ENCODE measurements at regions of chr12 and their contacts with region 1.

Region 1: GRCh38 chr12:11765817-11766794 is 116.6 kb downstream of the ETV6 start:
- DNase-seq: peak; percentile 88
- H3K4me3 Mint-ChIP-seq: peak overlapping the region; percentile 28
- H3K27ac Mint-ChIP-seq: peak overlapping the region; percentile 84
- H3K4me1 Mint-ChIP-seq: peaks cover 99% of the 10 kb centered on the region
- H3K27me3 Mint-ChIP-seq: no peaks in the 10 kb centered on the region

Region 2: DNA sequence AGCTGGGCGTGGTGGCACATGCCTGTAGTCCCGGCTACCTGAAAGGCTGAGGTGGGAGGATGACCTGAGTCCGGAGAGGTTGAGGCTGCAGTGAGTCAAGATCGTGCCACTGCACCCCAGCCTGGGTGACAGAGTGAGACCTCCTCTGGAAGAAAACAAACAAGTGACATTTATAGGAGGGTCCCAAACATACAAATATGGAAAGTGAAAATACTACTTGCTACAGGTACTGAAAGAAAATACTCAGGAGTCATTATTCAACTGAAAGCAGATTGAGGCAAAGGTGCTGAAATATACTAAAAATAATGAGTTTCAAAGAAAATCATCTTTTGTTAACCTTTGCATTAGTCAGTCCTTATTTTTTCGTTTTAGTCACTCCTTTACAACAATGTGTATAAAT is 63.1 kb before region 1 on chr12:
- CTCF ChIA-PET with region 1: no interaction called
- POLR2A ChIA-PET with region 1: no interaction called
- intact Hi-C with region 1: loop called (anchors 1 kb)
- DNase-seq: peak; percentile 49
- H3K4me3 Mint-ChIP-seq: peak overlapping the region; percentile 48
- H3K27ac Mint-ChIP-seq: peak overlapping the region; percentile 76
- H3K4me1 Mint-ChIP-seq: peaks cover 63% of the 10 kb centered on the region
- H3K27me3 Mint-ChIP-seq: no peaks in the 10 kb centered on the region

Region 3: GRCh38 chr12:11730299-11731041 is 35.6 kb before region 1 on chr12:
- CTCF ChIA-PET with region 1: interaction called, 4 read pairs
- POLR2A ChIA-PET with region 1: interaction called, 5 read pairs
- intact Hi-C with region 1: loop called (anchors 1 kb)
- DNase-seq: peak; percentile 10
- H3K4me3 Mint-ChIP-seq: no peak overlapping the region
- H3K27ac Mint-ChIP-seq: peak overlapping the region; percentile 62
- H3K4me1 Mint-ChIP-seq: peaks cover 76% of the 10 kb centered on the region
- H3K27me3 Mint-ChIP-seq: no peaks in the 10 kb centered on the region

Region 4: GRCh38 chr12:11786638-11787365 is 20.7 kb after region 1 on chr12:
- CTCF ChIA-PET with region 1: no interaction called
- POLR2A ChIA-PET with region 1: no interaction called
- intact Hi-C with region 1: no loop called
- DNase-seq: no peak
- H3K4me3 Mint-ChIP-seq: no peak overlapping the region
- H3K27ac Mint-ChIP-seq: no peak overlapping the region
- H3K4me1 Mint-ChIP-seq: peaks cover 52% of the 10 kb centered on the region
- H3K27me3 Mint-ChIP-seq: no peaks in the 10 kb centered on the region

Region 5: DNA sequence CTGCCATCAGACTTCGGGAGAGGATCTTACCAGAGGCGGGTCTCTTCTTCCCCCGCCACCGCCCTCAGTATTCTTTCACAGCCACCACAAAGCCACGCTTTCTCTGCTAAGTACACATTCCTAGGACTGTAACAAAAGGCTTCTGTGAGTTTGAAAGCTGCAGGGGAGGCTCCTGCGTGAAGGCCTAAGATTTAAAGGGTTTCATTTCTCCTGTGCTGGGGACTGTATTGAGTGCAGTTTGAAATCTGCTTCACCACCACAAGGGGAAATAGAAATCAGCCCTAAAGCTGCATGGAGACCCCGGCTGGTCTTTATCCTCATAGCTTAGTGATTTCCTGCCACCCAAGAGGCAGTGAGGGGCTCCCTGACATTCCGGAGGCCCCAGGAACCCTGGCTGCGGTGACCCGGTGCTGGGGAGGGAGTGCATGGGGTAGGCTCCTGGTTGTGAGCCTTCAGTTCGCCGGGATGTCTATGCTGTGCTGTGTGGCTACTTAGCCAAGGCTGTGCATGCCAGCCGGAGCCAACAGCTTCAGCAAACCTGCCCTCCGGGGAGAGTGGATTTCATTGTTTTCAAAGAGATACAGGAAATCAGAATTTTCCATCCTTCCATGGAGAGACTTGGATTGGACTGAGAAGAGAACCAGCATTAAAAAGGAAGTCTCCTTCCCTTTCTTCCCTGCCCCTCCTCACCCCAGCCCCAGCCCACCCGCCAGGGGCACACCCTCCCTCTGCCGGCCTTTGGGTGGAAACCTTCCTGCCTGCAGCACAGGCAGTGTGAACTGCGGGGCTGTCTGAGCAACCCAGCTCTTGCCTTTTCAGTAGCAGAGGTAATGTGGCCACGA is 46.7 kb after region 1 on chr12:
- CTCF ChIA-PET with region 1: no interaction called
- POLR2A ChIA-PET with region 1: interaction called, 6 read pairs
- intact Hi-C with region 1: loop called (anchors 2 kb)
- DNase-seq: peak; percentile 41
- H3K4me3 Mint-ChIP-seq: peak overlapping the region; percentile 63
- H3K27ac Mint-ChIP-seq: peak overlapping the region; percentile 78
- H3K4me1 Mint-ChIP-seq: peaks cover 80% of the 10 kb centered on the region
- H3K27me3 Mint-ChIP-seq: no peaks in the 10 kb centered on the region

Region 6: GRCh38 chr12:11958221-11959091 is 192.3 kb after region 1 on chr12:
- CTCF ChIA-PET with region 1: no interaction called
- POLR2A ChIA-PET with region 1: interaction called, 4 read pairs
- intact Hi-C with region 1: loop called (anchors 1 kb)
- DNase-seq: peak; percentile 80
- H3K4me3 Mint-ChIP-seq: peak overlapping the region; percentile 50
- H3K27ac Mint-ChIP-seq: peak overlapping the region; percentile 90
- H3K4me1 Mint-ChIP-seq: peaks cover 37% of the 10 kb centered on the region
- H3K27me3 Mint-ChIP-seq: no peaks in the 10 kb centered on the region

Measured in activated CD4-positive, alpha-beta memory T cell treated with anti-CD3 and anti-CD28 coated beads for 36 hours (primary cell).